GM12878 (cell line): ENCODE measurements at regions of chrX and their contacts with region 1.

Region 1: GRCh38 chrX:63458981-63459380 is 107.8 kb upstream of the SPIN4 start:
- DNase-seq: no peak
- ATAC-seq: no peak
- H3K4me3 ChIP-seq: no peak overlapping the region
- H3K27ac ChIP-seq: no peak overlapping the region
- H3K4me1 ChIP-seq: no peaks in the 10 kb centered on the region
- H3K27me3 ChIP-seq: no peaks in the 10 kb centered on the region
- CTCF ChIP-seq: no peak
- EP300 ChIP-seq: no peak
- POLR2A ChIP-seq: no peak
- RAD21 ChIP-seq: no peak

Region 2: GRCh38 chrX:63408050-63408449 is 50.9 kb before region 1 on chrX:
- CTCF ChIA-PET with region 1: no interaction called
- POLR2A ChIA-PET with region 1: no interaction called
- RAD21 ChIA-PET with region 1: no interaction called
- SMC1A ChIA-PET with region 1: no interaction called
- in situ Hi-C with region 1: no loop called
- intact Hi-C with region 1: loop called (anchors 5 kb)
- DNase-seq: no peak
- ATAC-seq: no peak
- H3K4me3 ChIP-seq: no peak overlapping the region
- H3K27ac ChIP-seq: no peak overlapping the region
- H3K4me1 ChIP-seq: no peaks in the 10 kb centered on the region
- H3K27me3 ChIP-seq: no peaks in the 10 kb centered on the region
- CTCF ChIP-seq: no peak
- EP300 ChIP-seq: no peak
- POLR2A ChIP-seq: no peak
- RAD21 ChIP-seq: no peak

Region 3: DNA sequence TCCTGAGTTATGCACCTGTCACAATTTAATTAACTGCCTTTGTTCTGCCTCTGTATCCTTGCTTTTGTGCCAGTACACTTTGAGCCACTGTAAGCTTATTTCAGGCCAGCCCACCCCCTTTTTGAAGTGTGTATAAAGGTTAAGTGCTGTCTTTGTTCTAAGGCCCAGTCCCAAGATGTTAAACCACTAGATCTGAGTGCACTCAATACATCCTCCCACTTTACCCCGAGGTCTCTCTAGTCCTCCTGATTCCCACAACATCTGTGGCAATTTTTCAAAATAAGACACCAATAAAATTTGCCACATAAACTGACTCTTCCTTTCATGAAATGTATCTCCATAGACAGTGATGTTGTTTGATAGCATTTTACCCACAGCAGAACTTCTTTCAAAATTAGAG is 16.2 kb after region 1 on chrX:
- CTCF ChIA-PET with region 1: no interaction called
- POLR2A ChIA-PET with region 1: no interaction called
- RAD21 ChIA-PET with region 1: no interaction called
- SMC1A ChIA-PET with region 1: no interaction called
- in situ Hi-C with region 1: no loop called
- intact Hi-C with region 1: no loop called
- DNase-seq: no peak
- ATAC-seq: no peak
- H3K4me3 ChIP-seq: no peak overlapping the region
- H3K27ac ChIP-seq: no peak overlapping the region
- H3K4me1 ChIP-seq: no peaks in the 10 kb centered on the region
- H3K27me3 ChIP-seq: no peaks in the 10 kb centered on the region
- CTCF ChIP-seq: no peak
- EP300 ChIP-seq: no peak
- POLR2A ChIP-seq: no peak
- RAD21 ChIP-seq: no peak